Activated CD8-positive, alpha-beta memory T cell treated with anti-CD3 and anti-CD28 coated beads, Interleukin-2, amount 10 ng/mL, durations not matched to agents 7 days and 5 days (primary cell): ENCODE measurements at regions of chr20 and their contacts with region 1.

Region 1: DNA sequence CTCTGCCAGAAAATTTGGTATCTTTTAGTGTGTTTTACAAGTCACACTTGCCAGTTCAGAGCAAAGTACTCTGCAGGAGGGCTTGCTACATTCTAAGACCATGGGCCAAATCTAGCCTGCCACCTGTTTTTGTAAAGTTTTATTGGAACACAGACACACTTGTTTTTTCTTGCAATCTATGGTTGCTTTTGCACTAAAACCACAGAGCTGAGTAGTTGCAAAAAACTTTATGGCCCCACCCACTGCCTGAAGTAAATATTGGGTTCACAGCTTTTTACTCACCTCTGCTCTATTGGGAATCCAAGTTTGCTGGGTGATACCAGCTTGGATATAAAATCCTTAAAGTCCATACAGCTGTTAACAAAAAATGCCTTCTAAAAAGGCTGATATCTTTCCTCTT is 109.0 kb downstream of the ZFP64 start:
- DNase-seq: no peak
- ATAC-seq: no peak
- H3K4me3 Mint-ChIP-seq: no peak overlapping the region
- H3K27ac Mint-ChIP-seq: no peak overlapping the region
- H3K4me1 Mint-ChIP-seq: peaks cover 9% of the 10 kb centered on the region
- H3K27me3 Mint-ChIP-seq: no peaks in the 10 kb centered on the region

Region 2: GRCh38 chr20:51695574-51696303 is 386.9 kb before region 1 on chr20:
- CTCF ChIA-PET with region 1: interaction called, 11 read pairs
- DNase-seq: no peak
- ATAC-seq: no peak
- H3K4me3 Mint-ChIP-seq: no peak overlapping the region
- H3K27ac Mint-ChIP-seq: no peak overlapping the region
- H3K4me1 Mint-ChIP-seq: peaks cover 8% of the 10 kb centered on the region
- H3K27me3 Mint-ChIP-seq: peaks cover 38% of the 10 kb centered on the region

Region 3: DNA sequence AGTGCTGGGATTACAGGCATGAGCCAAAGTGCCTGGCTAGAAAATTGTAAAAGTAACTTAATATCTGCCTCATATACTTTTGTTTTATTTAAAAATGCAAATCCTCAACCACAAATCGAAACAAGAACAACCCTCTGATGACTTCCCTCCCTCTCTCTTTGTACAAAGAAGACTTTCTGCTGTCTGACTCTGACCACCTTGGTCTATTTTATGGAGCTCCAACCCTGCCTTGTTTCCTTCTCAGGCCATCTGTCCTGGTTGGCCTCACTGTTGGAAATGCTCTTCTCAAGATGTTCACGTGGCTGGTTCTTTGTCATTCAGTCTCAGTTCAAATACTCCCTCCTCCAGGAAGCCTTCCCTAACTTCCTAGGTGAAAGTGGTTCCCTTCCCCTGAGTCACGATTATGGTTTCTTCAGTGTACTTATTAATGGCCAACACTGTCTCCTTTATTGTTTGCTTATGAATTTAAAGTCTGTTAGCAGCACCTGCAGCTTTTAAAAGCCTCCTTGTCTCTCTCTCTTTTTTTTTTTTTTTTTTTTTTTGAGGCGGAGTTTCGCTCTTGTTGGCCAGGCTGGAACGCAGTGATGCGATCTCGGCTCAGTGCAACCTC is 128.8 kb before region 1 on chr20:
- CTCF ChIA-PET with region 1: no interaction called
- DNase-seq: no peak
- ATAC-seq: no peak
- H3K4me3 Mint-ChIP-seq: no peak overlapping the region
- H3K27ac Mint-ChIP-seq: no peak overlapping the region
- H3K4me1 Mint-ChIP-seq: no peaks in the 10 kb centered on the region
- H3K27me3 Mint-ChIP-seq: peaks cover 8% of the 10 kb centered on the region